ENCODE measurements at regions of chr22 and their contacts with region 1.

Region 1: DNA sequence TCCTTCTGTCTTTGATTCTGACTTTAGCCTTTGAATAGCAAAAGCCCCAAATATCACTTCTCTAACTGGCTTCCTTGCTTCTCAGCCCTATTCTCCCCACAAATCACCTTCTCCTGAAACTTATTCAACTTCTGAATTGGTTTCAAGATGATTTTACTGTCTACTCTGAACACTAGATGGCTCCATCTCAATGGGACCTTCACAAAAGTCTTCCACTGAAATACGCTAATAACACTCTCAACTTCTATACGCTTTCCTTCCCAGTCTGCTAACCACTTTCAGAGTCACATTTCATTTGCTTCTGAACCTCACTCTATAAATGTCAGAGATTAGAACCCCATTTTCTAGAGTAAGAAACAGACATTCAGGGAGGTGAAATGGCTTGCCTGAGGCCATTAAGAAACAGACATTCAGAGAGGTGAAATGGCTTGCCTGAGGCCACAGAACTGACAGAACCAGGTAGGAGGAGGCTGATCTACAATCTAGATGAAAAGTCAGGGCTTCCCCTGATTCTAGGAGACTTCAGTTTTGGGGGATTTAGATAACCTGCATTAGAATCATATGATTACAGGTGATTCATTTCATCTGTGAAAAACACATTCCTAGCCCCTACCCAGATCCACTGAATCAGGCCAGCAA is 20.6 kb downstream of the MORC2 start:
- DNase-seq: peak; percentile 64
- H3K4me3 ChIP-seq: no peak overlapping the region
- H3K27ac ChIP-seq: peak overlapping the region; percentile 78
- H3K4me1 ChIP-seq: peaks cover 40% of the 10 kb centered on the region
- H3K27me3 ChIP-seq: no peaks in the 10 kb centered on the region
- CTCF ChIP-seq: peak; percentile 60 to 70

Region 2: GRCh38 chr22:30902496-30903357 is 45.2 kb before region 1 on chr22:
- CTCF ChIA-PET with region 1: no interaction called
- dilution Hi-C with region 1: loop called (anchors 5 kb)
- in situ Hi-C with region 1: no loop called
- intact Hi-C with region 1: no loop called
- DNase-seq: no peak
- H3K4me3 ChIP-seq: no peak overlapping the region
- H3K27ac ChIP-seq: no peak overlapping the region
- H3K4me1 ChIP-seq: no peaks in the 10 kb centered on the region
- H3K27me3 ChIP-seq: no peaks in the 10 kb centered on the region
- CTCF ChIP-seq: no peak

Region 3: GRCh38 chr22:31005535-31005934 is 57.6 kb after region 1 on chr22:
- CTCF ChIA-PET with region 1: no interaction called
- dilution Hi-C with region 1: no loop called
- in situ Hi-C with region 1: no loop called
- intact Hi-C with region 1: no loop called
- DNase-seq: no peak
- H3K4me3 ChIP-seq: no peak overlapping the region
- H3K27ac ChIP-seq: no peak overlapping the region
- H3K4me1 ChIP-seq: no peaks in the 10 kb centered on the region
- H3K27me3 ChIP-seq: no peaks in the 10 kb centered on the region
- CTCF ChIP-seq: no peak

Region 4: DNA sequence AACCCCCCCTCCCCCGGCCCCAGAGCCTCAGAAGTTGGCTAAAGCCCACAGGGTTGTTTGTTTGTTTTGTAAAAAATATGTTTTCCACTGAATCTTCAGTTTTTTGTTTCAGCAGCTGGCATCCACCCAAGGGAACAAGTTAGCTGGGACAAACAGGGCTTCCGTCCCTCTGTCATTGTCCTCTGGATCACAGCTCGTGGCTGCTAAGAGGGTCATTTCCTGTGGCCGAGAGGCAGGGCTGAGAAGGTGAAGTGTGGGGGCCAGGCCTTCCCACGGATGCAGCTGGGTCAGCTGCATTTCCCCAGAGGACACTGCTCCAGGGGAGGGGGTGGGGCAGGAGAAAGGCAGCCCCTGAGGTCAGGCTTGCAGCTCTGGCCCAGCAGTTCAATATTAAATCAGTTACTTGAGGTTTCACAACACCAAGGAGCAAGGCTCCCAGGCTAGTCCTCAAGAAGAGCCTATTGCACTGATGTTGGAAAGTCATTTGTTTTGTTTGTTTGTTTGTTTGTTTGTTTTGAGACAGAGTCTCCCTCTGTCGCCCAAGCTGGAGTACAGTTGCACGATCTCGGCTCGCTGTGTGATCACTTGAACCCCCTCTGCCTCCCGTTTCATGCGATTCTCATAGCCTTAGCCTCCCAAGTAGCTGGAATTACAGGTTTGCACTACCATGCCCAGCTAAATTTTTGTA is 98.7 kb after region 1 on chr22:
- CTCF ChIA-PET with region 1: no interaction called
- dilution Hi-C with region 1: loop called (anchors 5 kb)
- in situ Hi-C with region 1: no loop called
- intact Hi-C with region 1: no loop called
- DNase-seq: no peak
- H3K4me3 ChIP-seq: no peak overlapping the region
- H3K27ac ChIP-seq: no peak overlapping the region
- H3K4me1 ChIP-seq: peaks cover 4% of the 10 kb centered on the region
- H3K27me3 ChIP-seq: no peaks in the 10 kb centered on the region
- CTCF ChIP-seq: no peak

Region 5: GRCh38 chr22:31230871-31231621 is 283.1 kb after region 1 on chr22:
- CTCF ChIA-PET with region 1: no interaction called
- dilution Hi-C with region 1: no loop called
- in situ Hi-C with region 1: no loop called
- intact Hi-C with region 1: loop called (anchors 2 kb)
- DNase-seq: peak; percentile 16
- H3K4me3 ChIP-seq: no peak overlapping the region
- H3K27ac ChIP-seq: no peak overlapping the region
- H3K4me1 ChIP-seq: peaks cover 3% of the 10 kb centered on the region
- H3K27me3 ChIP-seq: no peaks in the 10 kb centered on the region
- CTCF ChIP-seq: peak; percentile 43 to 77

Measured in mammary epithelial cell (primary cell).